Naive thymus-derived CD4-positive, alpha-beta T cell (primary cell): ENCODE measurements at regions of chr17 and their contacts with region 1.

Region 1: GRCh38 chr17:53619025-53619424 is 203.7 kb upstream of the KIF2B start:
- DNase-seq: no peak
- ATAC-seq: no peak
- H3K4me3 ChIP-seq: no peak overlapping the region
- H3K4me3 Mint-ChIP-seq: no peak overlapping the region
- H3K27ac ChIP-seq: no peak overlapping the region
- H3K27ac Mint-ChIP-seq: no peak overlapping the region
- H3K4me1 ChIP-seq: no peaks in the 10 kb centered on the region
- H3K4me1 Mint-ChIP-seq: peaks cover 0 to 2% (median 0%) of the 10 kb centered on the region in 7 donors
- H3K27me3 ChIP-seq: no peaks in the 10 kb centered on the region
- H3K27me3 Mint-ChIP-seq: no peaks in the 10 kb centered on the region

Region 2: GRCh38 chr17:53560953-53561352 is 58.1 kb before region 1 on chr17:
- CTCF ChIA-PET with region 1: no interaction called
- POLR2A ChIA-PET with region 1: no interaction called
- intact Hi-C with region 1: loop called in 1 of 2 experiments (anchors 10 kb)
- DNase-seq: no peak
- ATAC-seq: no peak
- H3K4me3 ChIP-seq: no peak overlapping the region
- H3K4me3 Mint-ChIP-seq: no peak overlapping the region
- H3K27ac ChIP-seq: no peak overlapping the region
- H3K27ac Mint-ChIP-seq: no peak overlapping the region
- H3K4me1 ChIP-seq: no peaks in the 10 kb centered on the region
- H3K4me1 Mint-ChIP-seq: no peaks in the 10 kb centered on the region
- H3K27me3 ChIP-seq: no peaks in the 10 kb centered on the region
- H3K27me3 Mint-ChIP-seq: peaks cover 0 to under 1% (median 0%) of the 10 kb centered on the region in 5 donors

Region 3: GRCh38 chr17:53959876-53960275 is 340.9 kb after region 1 on chr17:
- CTCF ChIA-PET with region 1: no interaction called
- POLR2A ChIA-PET with region 1: no interaction called
- intact Hi-C with region 1: no loop called
- DNase-seq: no peak
- ATAC-seq: no peak
- H3K4me3 ChIP-seq: no peak overlapping the region
- H3K4me3 Mint-ChIP-seq: no peak overlapping the region
- H3K27ac ChIP-seq: no peak overlapping the region
- H3K27ac Mint-ChIP-seq: no peak overlapping the region
- H3K4me1 ChIP-seq: no peaks in the 10 kb centered on the region
- H3K4me1 Mint-ChIP-seq: no peaks in the 10 kb centered on the region
- H3K27me3 ChIP-seq: no peaks in the 10 kb centered on the region
- H3K27me3 Mint-ChIP-seq: no peaks in the 10 kb centered on the region